Mammary epithelial cell (primary cell): ENCODE measurements at regions of chr15 and their contacts with region 1.

Region 1: GRCh38 chr15:71294886-71295638 is 179.8 kb downstream of the THSD4 start:
- DNase-seq: peak; percentile 100
- H3K4me3 ChIP-seq: no peak overlapping the region
- H3K27ac ChIP-seq: peak overlapping the region; percentile 99
- H3K4me1 ChIP-seq: peaks cover 52% of the 10 kb centered on the region
- H3K27me3 ChIP-seq: no peaks in the 10 kb centered on the region
- CTCF ChIP-seq: no peak

Region 2: GRCh38 chr15:71048913-71049675 is 246.0 kb before region 1 on chr15:
- CTCF ChIA-PET with region 1: no interaction called
- dilution Hi-C with region 1: no loop called
- in situ Hi-C with region 1: no loop called
- intact Hi-C with region 1: loop called (anchors 1 kb)
- DNase-seq: peak; percentile 87
- H3K4me3 ChIP-seq: no peak overlapping the region
- H3K27ac ChIP-seq: peak overlapping the region; percentile 96
- H3K4me1 ChIP-seq: peaks cover 63% of the 10 kb centered on the region
- H3K27me3 ChIP-seq: no peaks in the 10 kb centered on the region
- CTCF ChIP-seq: no peak

Region 3: DNA sequence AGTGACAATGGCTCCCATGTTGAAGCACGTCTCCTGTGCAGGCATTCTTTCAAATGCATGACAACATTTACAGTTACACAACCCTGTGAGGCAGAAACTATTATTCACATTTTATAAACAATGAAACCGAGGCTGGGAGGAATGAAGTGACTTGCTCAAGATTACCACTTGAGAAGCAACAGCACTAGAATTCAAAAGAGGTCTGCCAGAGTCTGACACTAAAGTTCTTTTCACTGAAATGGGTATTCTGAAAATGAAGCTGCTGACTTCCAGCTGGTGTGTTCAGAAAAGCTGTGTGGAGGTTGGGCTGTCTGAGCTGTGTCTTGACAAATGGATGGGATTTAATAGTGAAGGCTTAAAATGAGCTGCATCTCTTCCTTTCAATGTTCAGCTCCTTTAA is 75.4 kb before region 1 on chr15:
- CTCF ChIA-PET with region 1: no interaction called
- dilution Hi-C with region 1: loop called (anchors 5 kb)
- in situ Hi-C with region 1: no loop called
- intact Hi-C with region 1: loop called (anchors 1 kb)
- DNase-seq: peak; percentile 86
- H3K4me3 ChIP-seq: no peak overlapping the region
- H3K27ac ChIP-seq: peak overlapping the region; percentile 70
- H3K4me1 ChIP-seq: peaks cover 38% of the 10 kb centered on the region
- H3K27me3 ChIP-seq: no peaks in the 10 kb centered on the region
- CTCF ChIP-seq: no peak

Region 4: DNA sequence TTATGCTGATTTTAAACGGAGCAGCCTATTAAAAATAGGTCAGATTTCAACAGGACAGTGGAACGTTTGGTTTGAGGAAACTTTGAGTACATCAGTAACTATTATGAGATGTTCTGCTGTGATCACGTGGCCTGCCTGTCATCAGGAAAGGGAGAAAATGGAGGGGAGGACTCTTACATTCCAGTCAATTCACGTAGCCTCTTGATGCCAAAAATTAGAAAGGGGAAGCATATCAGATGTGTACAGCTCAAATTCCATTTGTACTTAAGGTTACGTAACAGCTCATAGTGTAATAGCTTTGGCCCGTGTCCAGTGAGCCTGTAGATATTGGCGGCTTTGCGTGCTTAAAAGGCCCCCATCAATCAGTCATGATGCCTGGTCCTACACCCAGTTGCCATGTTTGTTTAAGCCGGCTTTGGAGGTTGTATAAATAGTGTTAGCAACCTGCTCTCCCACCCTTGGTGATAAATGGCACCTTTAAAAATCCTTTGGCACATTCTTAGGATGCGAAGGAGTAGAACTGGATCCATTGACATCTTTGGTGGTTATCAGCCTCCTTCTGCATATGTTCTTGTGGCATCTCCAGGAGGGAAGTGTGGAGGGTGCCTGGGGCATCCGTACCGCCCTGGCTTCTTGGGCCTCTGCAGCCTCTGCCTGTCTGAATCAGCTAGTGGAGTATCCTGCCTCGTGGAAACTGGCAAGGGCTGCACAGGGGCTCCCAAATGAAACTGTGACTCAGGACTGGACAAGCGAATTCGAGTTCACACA is 15.9 kb before region 1 on chr15:
- CTCF ChIA-PET with region 1: no interaction called
- dilution Hi-C with region 1: no loop called
- in situ Hi-C with region 1: no loop called
- intact Hi-C with region 1: loop called (anchors 1 kb)
- DNase-seq: peak; percentile 97
- H3K4me3 ChIP-seq: no peak overlapping the region
- H3K27ac ChIP-seq: peak overlapping the region; percentile 92
- H3K4me1 ChIP-seq: peaks cover 73% of the 10 kb centered on the region
- H3K27me3 ChIP-seq: no peaks in the 10 kb centered on the region
- CTCF ChIP-seq: no peak

Region 5: DNA sequence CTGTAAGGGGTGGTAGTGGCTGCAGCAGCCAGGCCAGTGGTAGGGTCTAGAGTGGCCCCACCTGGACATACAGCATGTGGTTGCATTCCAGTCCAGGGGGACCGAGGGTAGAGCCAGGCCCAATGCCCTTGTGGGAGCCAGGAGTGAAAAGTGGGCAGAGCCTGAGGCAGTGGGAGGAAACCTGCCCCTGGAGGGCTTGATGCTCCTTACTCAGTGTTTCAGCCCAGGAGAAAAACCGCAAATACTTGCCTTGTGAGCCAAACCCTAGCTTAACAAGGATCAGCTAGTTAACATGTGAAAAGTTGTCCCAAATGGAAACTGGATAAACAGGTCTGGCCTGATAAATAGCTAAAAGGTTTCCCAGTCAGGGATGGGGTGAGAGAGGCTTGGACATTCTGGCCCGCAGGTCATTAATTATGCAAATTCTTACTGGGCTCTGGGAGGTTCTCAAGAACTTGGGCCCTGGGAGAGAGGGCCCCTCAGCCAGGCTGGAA is 42.2 kb after region 1 on chr15:
- CTCF ChIA-PET with region 1: no interaction called
- dilution Hi-C with region 1: no loop called
- in situ Hi-C with region 1: no loop called
- intact Hi-C with region 1: loop called (anchors 2 kb)
- DNase-seq: peak; percentile 93
- H3K4me3 ChIP-seq: no peak overlapping the region
- H3K27ac ChIP-seq: peak overlapping the region; percentile 50
- H3K4me1 ChIP-seq: peaks cover 40% of the 10 kb centered on the region
- H3K27me3 ChIP-seq: no peaks in the 10 kb centered on the region
- CTCF ChIP-seq: no peak

Region 6: DNA sequence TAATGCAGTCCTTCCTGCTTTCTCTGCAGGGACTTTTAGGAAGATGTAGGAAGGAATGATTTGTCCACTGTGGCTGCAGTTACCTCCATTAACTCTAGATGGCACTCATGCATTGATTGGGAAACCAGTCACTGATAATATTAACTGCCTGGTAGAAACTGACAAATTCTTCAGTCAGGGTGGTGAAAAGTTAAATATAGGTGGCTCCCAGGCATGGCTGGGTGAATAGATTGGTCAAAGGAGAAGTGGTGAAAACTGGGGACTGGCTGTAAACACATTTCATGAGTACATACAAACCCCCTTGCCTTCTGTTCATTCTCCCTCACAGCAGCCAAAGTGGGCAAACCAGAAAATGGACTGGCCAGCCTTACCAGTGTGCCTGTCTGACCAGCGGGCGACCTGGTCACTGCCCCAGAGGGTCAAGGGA is 153.6 kb after region 1 on chr15:
- CTCF ChIA-PET with region 1: interaction called, 5 read pairs
- dilution Hi-C with region 1: no loop called
- in situ Hi-C with region 1: no loop called
- intact Hi-C with region 1: loop called (anchors 1 kb)
- DNase-seq: peak; percentile 73
- H3K4me3 ChIP-seq: no peak overlapping the region
- H3K27ac ChIP-seq: peak overlapping the region; percentile 99
- H3K4me1 ChIP-seq: peaks cover 49% of the 10 kb centered on the region
- H3K27me3 ChIP-seq: no peaks in the 10 kb centered on the region
- CTCF ChIP-seq: peak; percentile 93 to 98